IMR-90 (cell line): ENCODE measurements at regions of chrX and their contacts with region 1.

Region 1: DNA sequence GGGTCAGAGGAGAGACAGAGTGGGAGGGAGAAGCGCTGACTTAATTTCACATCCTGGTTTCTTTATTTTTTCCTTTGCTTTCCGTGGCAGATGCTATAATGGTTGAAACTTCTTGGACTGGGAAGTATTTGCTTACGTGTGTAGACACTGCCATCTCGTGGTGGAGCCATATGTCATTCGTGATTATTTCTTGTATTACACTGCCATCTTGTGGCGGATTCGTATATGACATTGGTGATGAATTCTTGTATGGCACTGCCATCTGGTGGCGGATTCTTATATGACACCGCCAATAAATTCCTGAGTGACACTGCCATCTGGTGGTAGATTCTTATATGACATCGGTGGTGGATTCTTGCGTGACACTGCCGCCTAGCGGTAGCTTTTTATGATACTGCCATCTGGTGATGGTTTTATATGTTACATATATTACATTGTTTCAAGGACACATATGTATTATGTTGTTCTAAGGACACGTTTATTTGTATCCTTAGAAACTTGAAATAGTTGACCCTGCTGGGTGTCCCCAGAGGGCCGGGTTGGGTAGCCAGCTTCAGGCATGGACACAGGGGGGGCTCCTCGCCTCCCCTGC is 37.3 kb upstream of the CLCN4 start:
- DNase-seq: peak; percentile 91
- ATAC-seq: peak; percentile 84
- H3K4me3 ChIP-seq: no peak overlapping the region
- H3K27ac ChIP-seq: no peak overlapping the region
- H3K4me1 ChIP-seq: no peaks in the 10 kb centered on the region
- H3K27me3 ChIP-seq: no peaks in the 10 kb centered on the region
- CTCF ChIP-seq: peak; percentile 100; the same call in 1 of the 2 replicates
- POLR2A ChIP-seq: peak; percentile 68
- RAD21 ChIP-seq: peak; percentile 99

Region 2: GRCh38 chrX:9708904-9709553 is 410.5 kb before region 1 on chrX:
- CTCF ChIA-PET with region 1: no interaction called
- POLR2A ChIA-PET with region 1: no interaction called
- dilution Hi-C with region 1: no loop called
- in situ Hi-C with region 1: no loop called
- intact Hi-C with region 1: loop called (anchors 2 kb)
- DNase-seq: peak; percentile 55
- ATAC-seq: peak; percentile 91
- H3K4me3 ChIP-seq: no peak overlapping the region
- H3K27ac ChIP-seq: no peak overlapping the region
- H3K4me1 ChIP-seq: no peaks in the 10 kb centered on the region
- H3K27me3 ChIP-seq: no peaks in the 10 kb centered on the region
- CTCF ChIP-seq: peak; percentile 78
- POLR2A ChIP-seq: no peak
- RAD21 ChIP-seq: peak; percentile 84

Region 3: GRCh38 chrX:9873952-9874351 is 245.5 kb before region 1 on chrX:
- CTCF ChIA-PET with region 1: interaction called, 4 read pairs
- POLR2A ChIA-PET with region 1: no interaction called
- dilution Hi-C with region 1: no loop called
- in situ Hi-C with region 1: loop called (anchors 25 kb)
- intact Hi-C with region 1: loop called (anchors 2 kb)
- DNase-seq: peak; percentile 49
- ATAC-seq: peak; percentile 52; the same call in 1 of the 2 replicates
- H3K4me3 ChIP-seq: no peak overlapping the region
- H3K27ac ChIP-seq: no peak overlapping the region
- H3K4me1 ChIP-seq: peaks cover 5% of the 10 kb centered on the region; the same call in 1 of the 2 replicates
- H3K27me3 ChIP-seq: no peaks in the 10 kb centered on the region
- CTCF ChIP-seq: peak; percentile 48
- POLR2A ChIP-seq: no peak
- RAD21 ChIP-seq: peak; percentile 51

Region 4: GRCh38 chrX:9995855-9996339 is 123.6 kb before region 1 on chrX:
- CTCF ChIA-PET with region 1: interaction called, 5 read pairs
- POLR2A ChIA-PET with region 1: no interaction called
- dilution Hi-C with region 1: no loop called
- in situ Hi-C with region 1: loop called (anchors 5 kb)
- intact Hi-C with region 1: loop called (anchors 1 kb)
- DNase-seq: peak; percentile 79
- ATAC-seq: peak; percentile 94
- H3K4me3 ChIP-seq: no peak overlapping the region
- H3K27ac ChIP-seq: no peak overlapping the region
- H3K4me1 ChIP-seq: no peaks in the 10 kb centered on the region
- H3K27me3 ChIP-seq: no peaks in the 10 kb centered on the region
- CTCF ChIP-seq: peak; percentile 98
- POLR2A ChIP-seq: no peak
- RAD21 ChIP-seq: peak; percentile 88

Region 5: DNA sequence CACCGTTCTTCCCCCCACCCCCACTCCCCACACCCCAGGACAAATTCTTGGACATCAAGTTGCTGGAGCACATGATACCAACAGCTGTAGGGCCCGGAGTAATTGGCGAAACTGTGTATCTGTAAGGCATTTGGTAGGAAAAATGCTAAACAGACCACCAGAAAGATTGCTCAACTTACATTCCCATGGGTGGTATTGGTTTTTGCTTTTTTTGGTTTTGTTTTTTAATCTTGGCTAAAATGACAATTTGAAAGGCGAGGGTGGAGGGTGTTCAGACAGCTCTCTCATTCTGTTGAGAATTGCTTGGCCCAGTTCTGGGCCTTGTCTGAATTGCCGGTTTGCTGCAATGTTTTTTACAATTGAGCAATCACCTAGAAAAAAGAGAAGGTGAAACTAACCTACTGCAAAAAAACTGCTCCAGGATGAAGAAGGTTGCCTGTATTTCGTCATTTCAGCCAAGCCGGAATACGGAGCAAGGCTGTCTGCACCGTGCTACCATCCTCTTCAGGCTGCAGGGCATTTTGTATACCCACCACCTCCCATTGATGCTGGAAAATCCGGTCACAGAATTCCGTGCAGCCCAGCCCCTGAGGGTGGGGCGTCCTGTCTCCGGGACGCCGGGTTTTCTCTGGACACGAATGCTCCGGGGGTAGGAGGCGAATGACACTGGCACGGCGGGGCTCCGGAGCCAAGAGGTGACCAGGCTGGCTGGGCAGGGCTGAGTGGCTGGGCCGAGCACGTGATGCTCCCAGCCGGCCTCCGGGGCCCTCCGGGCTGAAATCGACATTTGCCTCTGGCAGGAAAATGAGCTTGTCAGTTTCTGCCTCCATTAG is 36.9 kb after region 1 on chrX and contains the start of gene CLCN4:
- CTCF ChIA-PET with region 1: no interaction called
- POLR2A ChIA-PET with region 1: no interaction called
- dilution Hi-C with region 1: no loop called
- in situ Hi-C with region 1: no loop called
- intact Hi-C with region 1: no loop called
- DNase-seq: no peak
- ATAC-seq: peak; percentile 77
- H3K4me3 ChIP-seq: peak within 1 kb of the TSS; percentile 2
- H3K27ac ChIP-seq: peak within 1 kb of the TSS; percentile 1
- H3K4me1 ChIP-seq: peaks cover 5% of the 10 kb centered on the region
- H3K27me3 ChIP-seq: no peaks in the 10 kb centered on the region
- CTCF ChIP-seq: no peak
- POLR2A ChIP-seq: no peak
- RAD21 ChIP-seq: no peak
- total RNA-seq, gene CLCN4: 3.9 and 4.5 TPM in 2 replicates